ENCODE measurements at regions of chr5 and their contacts with region 1.

Region 1: DNA sequence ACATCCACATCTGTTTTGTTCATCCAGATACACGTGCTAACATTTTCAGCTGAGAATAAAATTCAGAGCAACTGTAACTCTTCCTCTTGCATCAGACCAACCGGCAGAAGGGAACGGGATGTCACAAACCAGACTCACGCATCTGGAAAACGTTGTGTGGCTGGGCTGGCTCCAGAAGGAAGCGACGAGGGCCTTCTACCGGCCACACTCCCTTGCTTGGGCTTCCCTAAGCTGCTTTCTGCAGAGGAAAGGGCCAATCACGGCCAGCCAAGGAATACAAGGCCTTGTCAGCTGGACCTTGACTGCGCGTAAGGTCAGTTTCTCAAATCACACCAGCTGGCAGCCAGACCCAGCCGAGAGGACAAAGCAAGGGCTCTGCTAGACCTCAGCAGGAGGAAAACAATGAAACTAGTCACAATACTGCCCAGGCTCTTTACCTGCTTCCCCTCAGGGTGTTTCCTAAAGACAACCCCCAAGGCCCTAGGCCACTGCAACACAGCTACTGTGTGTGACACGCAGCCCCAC is 106.1 kb downstream of the THBS4 start:
- DNase-seq: no peak
- ATAC-seq: peak; percentile 32
- H3K4me3 ChIP-seq: no peak overlapping the region
- H3K27ac ChIP-seq: no peak overlapping the region
- H3K4me1 ChIP-seq: peaks cover 32% of the 10 kb centered on the region
- H3K27me3 ChIP-seq: no peaks in the 10 kb centered on the region
- CTCF ChIP-seq: no peak
- EP300 ChIP-seq: no peak
- POLR2A ChIP-seq: no peak
- RAD21 ChIP-seq: no peak

Region 2: GRCh38 chr5:80109646-80110478 is 31.3 kb before region 1 on chr5:
- CTCF ChIA-PET with region 1: interaction called, 6 read pairs
- POLR2A ChIA-PET with region 1: interaction called, 5 read pairs
- RAD21 ChIA-PET with region 1: interaction called, 10 read pairs
- SMC1A ChIA-PET with region 1: interaction called, 10 read pairs
- in situ Hi-C with region 1: no loop called
- intact Hi-C with region 1: no loop called
- DNase-seq: peak; percentile 52
- ATAC-seq: peak; percentile 86
- H3K4me3 ChIP-seq: no peak overlapping the region
- H3K27ac ChIP-seq: no peak overlapping the region
- H3K4me1 ChIP-seq: peaks cover 11% of the 10 kb centered on the region
- H3K27me3 ChIP-seq: no peaks in the 10 kb centered on the region
- CTCF ChIP-seq: no peak
- EP300 ChIP-seq: no peak
- POLR2A ChIP-seq: no peak
- RAD21 ChIP-seq: no peak

Region 3: GRCh38 chr5:80246001-80246758 is 105.0 kb after region 1 on chr5:
- CTCF ChIA-PET with region 1: no interaction called
- POLR2A ChIA-PET with region 1: interaction called, 8 read pairs
- RAD21 ChIA-PET with region 1: interaction called, 10 read pairs
- SMC1A ChIA-PET with region 1: interaction called, 14 read pairs
- in situ Hi-C with region 1: no loop called
- intact Hi-C with region 1: no loop called
- DNase-seq: no peak
- ATAC-seq: peak; percentile 25
- H3K4me3 ChIP-seq: no peak overlapping the region
- H3K27ac ChIP-seq: no peak overlapping the region; the same call in 1 of the 2 replicates
- H3K4me1 ChIP-seq: peaks cover 26% of the 10 kb centered on the region
- H3K27me3 ChIP-seq: no peaks in the 10 kb centered on the region
- CTCF ChIP-seq: no peak
- EP300 ChIP-seq: no peak
- POLR2A ChIP-seq: no peak
- RAD21 ChIP-seq: no peak

Region 4: DNA sequence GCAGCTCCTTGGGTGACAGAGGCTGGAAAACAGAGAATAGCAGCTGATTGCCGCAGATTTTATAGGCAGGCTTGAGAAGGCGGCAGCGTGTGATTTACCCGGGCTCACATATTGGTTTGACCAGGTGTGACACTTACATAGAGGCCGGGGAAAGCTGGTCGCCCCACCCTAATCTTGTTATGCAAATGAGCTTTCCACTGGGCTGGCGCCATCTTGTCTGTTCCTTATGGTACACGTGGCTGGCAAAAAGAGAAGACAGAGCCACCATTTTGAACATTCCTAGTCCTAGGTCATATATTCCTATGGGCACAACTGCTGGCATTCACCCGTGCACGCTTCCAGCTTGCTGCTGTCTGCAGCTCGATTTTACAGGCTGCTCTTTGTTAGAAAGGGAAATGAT is 167.3 kb after region 1 on chr5:
- CTCF ChIA-PET with region 1: interaction called, 5 read pairs
- POLR2A ChIA-PET with region 1: no interaction called
- RAD21 ChIA-PET with region 1: interaction called, 8 read pairs
- SMC1A ChIA-PET with region 1: interaction called, 14 read pairs
- in situ Hi-C with region 1: no loop called
- intact Hi-C with region 1: no loop called
- DNase-seq: no peak
- ATAC-seq: no peak
- H3K4me3 ChIP-seq: no peak overlapping the region
- H3K27ac ChIP-seq: no peak overlapping the region
- H3K4me1 ChIP-seq: no peaks in the 10 kb centered on the region
- H3K27me3 ChIP-seq: no peaks in the 10 kb centered on the region; a peak in 1 of 4 replicates
- CTCF ChIP-seq: no peak
- EP300 ChIP-seq: no peak
- POLR2A ChIP-seq: no peak
- RAD21 ChIP-seq: no peak